Activated T-helper 1 cell treated with anti-CD3 and anti-CD28 coated beads, Interleukin-12 subunit alpha, Interleukin-12 subunit beta, Interleukin-2, Interleukin-4 antibody, amounts not matched to agents 30 ng/mL and 10 ng/mL and 1 ng/mL, durations not matched to agents 14 hours and 24 hours and 36 hours (primary cell): ENCODE measurements at regions of chr13 and their contacts with region 1.

Region 1: DNA sequence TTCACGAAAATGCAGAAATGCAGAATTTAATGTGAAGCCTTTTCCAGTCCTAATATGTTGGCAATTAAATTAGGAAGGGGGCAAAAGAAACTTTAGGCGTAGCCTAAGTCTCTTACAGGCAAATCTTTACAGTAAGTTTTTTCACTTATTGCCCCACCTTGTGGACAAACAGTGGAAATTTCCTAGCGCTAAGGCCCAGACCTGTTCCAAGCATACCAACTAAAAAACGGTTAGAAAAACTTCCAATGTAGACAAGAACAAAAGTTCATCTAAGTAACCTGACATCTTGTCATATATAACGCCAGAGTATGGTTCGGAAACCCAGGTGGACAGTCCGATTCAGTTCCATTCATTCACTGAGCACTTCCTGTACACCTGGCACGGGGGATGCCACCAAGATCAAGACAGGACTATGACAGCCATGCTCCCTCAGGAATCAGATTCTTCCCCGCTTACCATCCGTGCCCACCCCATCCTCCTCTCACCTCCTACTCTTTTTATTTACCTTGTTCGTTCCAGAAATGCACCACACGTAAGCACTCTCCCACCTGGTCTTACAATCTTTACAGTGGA is 4.9 kb downstream of the ZAR1L start:
- DNase-seq: peak; percentile 26
- H3K4me3 Mint-ChIP-seq: no peak overlapping the region
- H3K27ac Mint-ChIP-seq: no peak overlapping the region
- H3K4me1 Mint-ChIP-seq: peaks cover 30% of the 10 kb centered on the region
- H3K27me3 Mint-ChIP-seq: no peaks in the 10 kb centered on the region

Region 2: GRCh38 chr13:31909864-31910551 is 400.2 kb before region 1 on chr13:
- intact Hi-C with region 1: loop called (anchors 1 kb)
- DNase-seq: peak; percentile 38
- H3K4me3 Mint-ChIP-seq: no peak overlapping the region
- H3K27ac Mint-ChIP-seq: no peak overlapping the region
- H3K4me1 Mint-ChIP-seq: peaks cover 27% of the 10 kb centered on the region
- H3K27me3 Mint-ChIP-seq: peaks cover 15% of the 10 kb centered on the region

Region 3: DNA sequence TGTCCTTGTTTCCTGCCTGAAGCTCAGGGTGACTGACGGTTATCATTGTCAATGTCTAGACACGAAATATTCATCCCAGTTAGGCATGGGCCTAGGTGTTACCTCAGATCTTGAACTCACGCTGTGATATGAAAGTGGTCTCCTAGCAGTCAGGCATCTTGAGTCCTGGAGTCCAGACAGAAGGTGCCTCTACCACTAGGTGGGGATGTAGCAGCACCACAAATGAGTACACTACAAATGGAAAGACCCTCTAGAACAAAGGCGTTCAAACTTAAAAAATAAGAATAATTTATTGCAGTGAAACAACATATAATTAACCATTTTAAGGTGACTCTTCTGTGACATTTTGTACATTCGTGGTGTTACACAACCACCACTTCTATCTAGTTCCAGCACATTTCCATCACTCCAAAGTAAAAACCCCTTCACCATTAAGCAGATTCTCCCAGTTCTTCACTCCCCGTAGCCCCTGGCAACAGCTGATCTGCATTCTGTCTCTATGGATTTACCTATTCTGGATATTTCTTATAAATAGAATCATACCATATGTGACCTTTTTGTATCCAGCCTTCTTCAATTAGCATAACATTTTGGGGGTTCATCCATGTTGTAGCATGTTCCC is 290.5 kb before region 1 on chr13:
- intact Hi-C with region 1: loop called (anchors 1 kb)
- DNase-seq: no peak
- H3K4me3 Mint-ChIP-seq: no peak overlapping the region
- H3K27ac Mint-ChIP-seq: no peak overlapping the region
- H3K4me1 Mint-ChIP-seq: peaks cover 4% of the 10 kb centered on the region
- H3K27me3 Mint-ChIP-seq: no peaks in the 10 kb centered on the region

Region 4: GRCh38 chr13:32164622-32165268 is 145.5 kb before region 1 on chr13:
- intact Hi-C with region 1: loop called (anchors 1 kb)
- DNase-seq: no peak
- H3K4me3 Mint-ChIP-seq: no peak overlapping the region
- H3K27ac Mint-ChIP-seq: no peak overlapping the region
- H3K4me1 Mint-ChIP-seq: no peaks in the 10 kb centered on the region
- H3K27me3 Mint-ChIP-seq: no peaks in the 10 kb centered on the region

Region 5: GRCh38 chr13:32246468-32246867 is 63.8 kb before region 1 on chr13:
- intact Hi-C with region 1: loop called (anchors 1 kb)
- DNase-seq: no peak
- H3K4me3 Mint-ChIP-seq: no peak overlapping the region
- H3K27ac Mint-ChIP-seq: no peak overlapping the region
- H3K4me1 Mint-ChIP-seq: no peaks in the 10 kb centered on the region
- H3K27me3 Mint-ChIP-seq: peaks cover 2% of the 10 kb centered on the region

Region 6: GRCh38 chr13:32267836-32268439 is 42.3 kb before region 1 on chr13:
- intact Hi-C with region 1: loop called (anchors 1 kb)
- DNase-seq: peak; percentile 10
- H3K4me3 Mint-ChIP-seq: no peak overlapping the region
- H3K27ac Mint-ChIP-seq: no peak overlapping the region
- H3K4me1 Mint-ChIP-seq: peaks cover 9% of the 10 kb centered on the region
- H3K27me3 Mint-ChIP-seq: no peaks in the 10 kb centered on the region

Region 7: DNA sequence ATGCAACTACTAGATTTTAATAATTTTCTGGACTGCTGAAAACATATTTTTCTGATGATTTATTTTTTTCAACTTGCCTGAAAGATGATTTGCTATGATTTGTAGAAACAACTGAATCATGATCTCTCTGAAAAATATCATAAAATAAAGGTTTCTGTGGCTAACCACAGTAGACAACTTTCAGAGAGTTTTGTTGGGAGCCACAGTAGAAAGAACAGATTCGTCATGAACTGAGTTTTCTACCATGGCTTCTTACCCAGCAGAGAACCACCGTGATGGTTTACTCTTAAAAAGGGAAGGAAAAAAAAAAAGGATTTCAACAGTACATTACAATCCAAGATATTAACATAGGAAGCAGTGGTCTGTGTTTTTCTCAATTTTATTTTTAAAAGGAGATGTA is 13.0 kb before region 1 on chr13:
- intact Hi-C with region 1: loop called (anchors 1 kb)
- DNase-seq: no peak
- H3K4me3 Mint-ChIP-seq: no peak overlapping the region
- H3K27ac Mint-ChIP-seq: no peak overlapping the region
- H3K4me1 Mint-ChIP-seq: peaks cover 18% of the 10 kb centered on the region
- H3K27me3 Mint-ChIP-seq: peaks cover 17% of the 10 kb centered on the region

Region 8: DNA sequence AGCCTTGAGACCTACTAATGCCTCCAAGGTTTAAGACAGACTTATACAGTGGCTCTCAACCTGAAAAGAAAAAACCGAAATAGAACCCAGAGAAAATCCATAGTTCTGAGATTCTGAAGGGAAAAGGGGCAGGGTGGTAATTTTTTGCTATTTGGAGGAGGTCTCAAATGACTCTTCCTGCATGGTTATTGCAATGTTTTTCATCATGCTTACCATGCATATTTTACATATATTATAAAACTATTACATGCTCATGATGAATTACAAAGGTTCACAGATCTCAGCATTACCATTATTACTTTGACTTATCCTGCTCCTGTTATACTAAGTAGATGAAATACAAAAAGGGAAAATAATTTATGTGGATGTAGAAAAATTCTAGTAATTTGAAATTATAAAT is 180.8 kb after region 1 on chr13:
- intact Hi-C with region 1: no loop called
- DNase-seq: no peak
- H3K4me3 Mint-ChIP-seq: no peak overlapping the region
- H3K27ac Mint-ChIP-seq: no peak overlapping the region
- H3K4me1 Mint-ChIP-seq: no peaks in the 10 kb centered on the region
- H3K27me3 Mint-ChIP-seq: no peaks in the 10 kb centered on the region